ENCODE measurements at regions of chr12 and their contacts with region 1.

Region 1: DNA sequence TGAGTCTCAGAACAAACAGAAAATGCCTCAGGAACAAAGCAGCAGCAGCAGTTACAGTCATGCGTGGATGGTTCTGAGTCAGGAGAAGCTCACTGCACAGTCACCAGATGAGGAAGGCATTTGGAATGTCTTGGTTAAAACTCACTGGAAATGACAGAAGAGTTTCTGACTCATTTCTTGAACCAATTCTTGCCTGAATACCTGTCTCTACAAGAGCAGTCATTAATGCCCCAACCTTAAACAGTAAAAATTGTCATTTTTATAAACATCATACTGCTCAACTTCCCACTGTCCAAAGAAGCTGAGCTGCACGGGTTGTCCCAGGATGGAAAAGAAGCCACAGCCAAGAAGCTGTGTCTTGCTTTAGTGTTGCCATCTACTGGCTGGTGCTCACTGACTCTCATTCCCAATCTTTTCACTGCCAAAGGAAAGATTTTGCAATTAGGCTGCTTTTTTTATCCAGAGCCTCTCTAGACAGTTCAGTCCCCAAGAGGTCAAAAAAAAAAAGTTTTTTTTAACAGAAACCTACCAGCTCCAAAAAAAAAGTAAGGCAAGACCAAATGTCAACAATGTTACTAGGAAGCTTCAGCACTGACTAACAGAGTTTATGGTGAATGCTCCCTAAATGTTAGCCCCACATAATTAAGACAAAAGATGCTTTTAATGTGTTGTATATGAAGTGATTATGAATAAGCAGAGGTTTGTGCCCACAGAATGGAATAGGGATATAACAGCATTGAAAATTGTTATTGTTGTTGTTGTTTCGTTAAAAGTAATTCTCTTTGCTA is 40.4 kb downstream of the KICS2 start:
- DNase-seq: peak; percentile 69 to 90
- ATAC-seq: peak; percentile 97 to 98
- H3K4me3 ChIP-seq: no peak overlapping the region
- H3K27ac ChIP-seq: peak overlapping the region; percentile 79 to 87
- H3K4me1 ChIP-seq: peaks cover 38% of the 10 kb centered on the region
- CTCF ChIP-seq: peak; percentile 74
- EP300 ChIP-seq: peak; percentile 28 to 37; a peak in 1 of 5 replicates
- POLR2A ChIP-seq: no peak
- RAD21 ChIP-seq: peak; percentile 79 to 84

Region 2: DNA sequence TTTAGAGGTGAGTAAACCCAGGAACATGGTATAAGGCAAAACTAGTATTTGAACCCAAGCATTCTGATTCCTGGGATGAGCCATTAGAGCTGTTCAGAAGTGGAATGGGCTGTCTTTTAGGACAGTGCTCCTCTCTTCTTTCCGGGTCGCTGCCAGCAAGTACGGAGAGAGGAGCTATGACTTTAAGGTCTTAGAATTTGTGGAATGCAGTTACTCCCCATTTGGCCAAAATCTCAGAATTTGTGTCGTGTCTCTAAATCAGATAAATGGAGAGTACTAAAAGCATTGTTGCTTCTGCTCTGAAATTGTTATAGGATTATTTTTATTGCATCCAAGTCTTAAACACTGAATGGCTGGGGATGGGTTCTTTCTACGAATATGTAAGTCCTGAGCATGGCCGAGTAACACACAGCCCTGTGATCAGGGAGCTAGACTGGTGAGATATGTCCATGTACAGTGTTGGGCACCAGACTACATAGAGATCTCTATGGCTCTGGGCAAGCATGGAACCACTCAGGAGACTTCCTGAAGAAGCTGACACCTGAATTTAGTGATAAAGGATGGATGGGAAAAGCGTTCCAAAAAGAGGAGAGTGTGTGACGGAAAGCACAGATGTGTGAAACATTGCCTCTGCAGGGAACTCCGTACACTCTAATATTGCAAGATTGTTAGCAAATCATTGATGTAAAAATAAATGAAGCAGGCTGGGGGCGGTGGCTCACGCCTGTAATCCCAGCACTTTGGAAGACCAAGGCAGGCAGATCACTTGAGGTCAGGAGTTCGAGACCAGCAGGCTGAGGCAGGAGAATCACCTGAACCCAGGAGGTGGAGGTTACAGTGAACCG is 152.5 kb before region 1 on chr12:
- CTCF ChIA-PET with region 1: no interaction called
- POLR2A ChIA-PET with region 1: no interaction called
- DNase-seq: no peak
- ATAC-seq: no peak
- H3K4me3 ChIP-seq: no peak overlapping the region
- H3K27ac ChIP-seq: no peak overlapping the region
- H3K4me1 ChIP-seq: no peaks in the 10 kb centered on the region
- CTCF ChIP-seq: no peak
- EP300 ChIP-seq: no peak
- POLR2A ChIP-seq: no peak
- RAD21 ChIP-seq: no peak

Region 3: GRCh38 chr12:64088431-64089349 is 93.0 kb before region 1 on chr12:
- CTCF ChIA-PET with region 1: interaction called, 13 read pairs
- POLR2A ChIA-PET with region 1: no interaction called
- DNase-seq: peak; percentile 88 to 94
- ATAC-seq: peak; percentile 95 to 98
- H3K4me3 ChIP-seq: peak overlapping the region; percentile 4; the same call in 2 of the 3 replicates
- H3K27ac ChIP-seq: peak overlapping the region; percentile 91
- H3K4me1 ChIP-seq: peaks cover 63% of the 10 kb centered on the region
- CTCF ChIP-seq: no peak
- EP300 ChIP-seq: peak in 1 of 2 experiments; percentile 62; a peak in 2 of 5 replicates
- POLR2A ChIP-seq: no peak
- RAD21 ChIP-seq: peak in 1 of 2 experiments; percentile 3; a peak in 2 of 5 replicates

Region 4: GRCh38 chr12:64124511-64125197 is 57.0 kb before region 1 on chr12:
- CTCF ChIA-PET with region 1: no interaction called
- POLR2A ChIA-PET with region 1: no interaction called
- DNase-seq: no peak
- ATAC-seq: no peak
- H3K4me3 ChIP-seq: no peak overlapping the region
- H3K27ac ChIP-seq: no peak overlapping the region
- H3K4me1 ChIP-seq: peaks cover 7% of the 10 kb centered on the region; the same call in 2 of the 3 replicates
- CTCF ChIP-seq: no peak
- EP300 ChIP-seq: no peak
- POLR2A ChIP-seq: no peak
- RAD21 ChIP-seq: no peak

Region 5: DNA sequence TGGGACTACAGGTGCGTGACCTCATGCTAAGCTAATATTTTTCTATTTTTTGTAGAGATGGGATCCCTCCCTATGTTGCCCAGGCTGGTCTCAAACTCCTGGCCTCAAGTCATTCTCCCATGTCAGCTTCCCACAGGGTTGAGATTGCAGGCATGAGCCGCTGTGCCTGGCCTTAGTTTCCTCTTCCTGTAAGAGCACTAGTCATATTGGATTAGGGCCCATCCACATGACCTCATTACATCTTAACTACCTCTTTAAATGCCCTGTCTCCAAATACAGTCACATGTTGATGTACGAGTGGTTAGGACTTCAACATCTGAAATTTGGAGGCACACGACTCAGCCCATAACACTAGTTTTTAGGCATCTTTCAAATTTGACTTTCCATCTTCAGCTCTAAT is 356.4 kb after region 1 on chr12:
- CTCF ChIA-PET with region 1: no interaction called
- POLR2A ChIA-PET with region 1: no interaction called
- DNase-seq: no peak
- ATAC-seq: no peak
- H3K4me3 ChIP-seq: no peak overlapping the region
- H3K27ac ChIP-seq: no peak overlapping the region
- H3K4me1 ChIP-seq: no peaks in the 10 kb centered on the region
- CTCF ChIP-seq: no peak
- EP300 ChIP-seq: no peak
- POLR2A ChIP-seq: no peak
- RAD21 ChIP-seq: no peak

Measured in A549 (cell line).